ENCODE measurements at regions of chr2 and their contacts with region 1.

Region 1: GRCh38 chr2:188227713-188228112 is 64.0 kb upstream of the GULP1 start:
- DNase-seq: no peak
- ATAC-seq: no peak

Region 2: GRCh38 chr2:188076149-188077056 is 151.3 kb before region 1 on chr2:
- intact Hi-C with region 1: loop called in 1 of 2 experiments (anchors 10 kb)
- DNase-seq: no peak
- ATAC-seq: no peak

Measured in left cardiac atrium (tissue), 4 donors.